Activated CD4-positive, alpha-beta memory T cell treated with anti-CD3 and anti-CD28 coated beads, Interleukin-2, amount 10 ng/mL, durations not matched to agents 7 days and 5 days (primary cell): ENCODE measurements at regions of chr11 and their contacts with region 1.

Region 1: DNA sequence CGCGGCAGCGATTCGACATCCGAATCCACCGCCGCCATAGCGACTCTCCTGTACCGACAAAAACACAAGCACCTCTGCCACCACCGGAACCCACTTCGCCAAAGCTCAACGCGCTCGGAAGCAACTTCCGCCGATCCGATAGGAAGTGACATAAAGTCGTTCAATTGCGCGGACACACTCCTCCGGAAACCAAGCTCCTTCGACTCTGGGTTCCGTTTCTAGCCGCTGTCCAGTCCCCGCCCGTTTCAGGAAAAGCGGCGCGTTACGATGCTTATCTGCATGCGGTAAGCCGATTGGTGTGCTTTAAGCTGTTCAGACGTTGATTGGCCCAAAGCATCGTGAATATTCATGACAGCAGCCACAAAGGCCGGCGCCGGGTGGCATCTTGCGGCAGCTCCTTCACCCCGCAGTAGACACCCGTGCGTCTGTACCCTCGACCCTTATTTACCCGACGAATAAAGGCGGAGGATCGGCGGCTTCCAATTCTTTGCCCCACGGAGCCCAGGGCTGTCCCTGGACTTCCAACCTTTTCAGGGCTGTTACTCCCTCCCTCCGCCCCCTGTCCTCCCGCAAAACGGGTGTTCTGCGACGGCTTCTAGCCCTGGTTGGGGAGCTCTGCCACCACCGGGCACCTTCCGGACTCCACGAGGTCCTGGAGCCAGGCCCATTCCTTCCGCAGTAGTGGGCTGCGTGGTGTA is at the start of gene TUT1:
- DNase-seq: peak; percentile 98
- H3K4me3 Mint-ChIP-seq: peak within 1 kb of the TSS; percentile 99
- H3K27ac Mint-ChIP-seq: peak within 1 kb of the TSS; percentile 96
- H3K4me1 Mint-ChIP-seq: peaks cover 65% of the 10 kb centered on the region
- H3K27me3 Mint-ChIP-seq: no peaks in the 10 kb centered on the region
- total RNA-seq, gene TUT1: 23.7 to 25.2 TPM

Region 2: GRCh38 chr11:61776551-61777075 is 815.0 kb before region 1 on chr11:
- CTCF ChIA-PET with region 1: no interaction called
- POLR2A ChIA-PET with region 1: no interaction called
- DNase-seq: peak; percentile 77
- H3K4me3 Mint-ChIP-seq: no peak overlapping the region
- H3K27ac Mint-ChIP-seq: no peak overlapping the region
- H3K4me1 Mint-ChIP-seq: peaks cover 34% of the 10 kb centered on the region
- H3K27me3 Mint-ChIP-seq: peaks cover 4% of the 10 kb centered on the region

Region 3: GRCh38 chr11:62542750-62543567 is 48.6 kb before region 1 on chr11:
- CTCF ChIA-PET with region 1: interaction called, 17 read pairs
- POLR2A ChIA-PET with region 1: interaction called, 19 read pairs
- DNase-seq: peak; percentile 80
- H3K4me3 Mint-ChIP-seq: peak overlapping the region; percentile 100
- H3K27ac Mint-ChIP-seq: peak overlapping the region; percentile 93
- H3K4me1 Mint-ChIP-seq: peaks cover 76% of the 10 kb centered on the region
- H3K27me3 Mint-ChIP-seq: peaks cover 4% of the 10 kb centered on the region

Region 4: GRCh38 chr11:62612366-62613290 is 21.0 kb after region 1 on chr11 and contains the starts of genes EML3 and ROM1:
- CTCF ChIA-PET with region 1: interaction called, 28 read pairs
- POLR2A ChIA-PET with region 1: interaction called, 70 read pairs
- DNase-seq: peak; percentile 91
- H3K4me3 Mint-ChIP-seq: peak within 1 kb of the TSS; percentile 97
- H3K27ac Mint-ChIP-seq: peak within 1 kb of the TSS; percentile 93
- H3K4me1 Mint-ChIP-seq: peaks cover 65% of the 10 kb centered on the region
- H3K27me3 Mint-ChIP-seq: no peaks in the 10 kb centered on the region
- total RNA-seq, gene EML3: 121 to 122 TPM
- total RNA-seq, gene ROM1: 1.6 to 2.2 TPM

Region 5: DNA sequence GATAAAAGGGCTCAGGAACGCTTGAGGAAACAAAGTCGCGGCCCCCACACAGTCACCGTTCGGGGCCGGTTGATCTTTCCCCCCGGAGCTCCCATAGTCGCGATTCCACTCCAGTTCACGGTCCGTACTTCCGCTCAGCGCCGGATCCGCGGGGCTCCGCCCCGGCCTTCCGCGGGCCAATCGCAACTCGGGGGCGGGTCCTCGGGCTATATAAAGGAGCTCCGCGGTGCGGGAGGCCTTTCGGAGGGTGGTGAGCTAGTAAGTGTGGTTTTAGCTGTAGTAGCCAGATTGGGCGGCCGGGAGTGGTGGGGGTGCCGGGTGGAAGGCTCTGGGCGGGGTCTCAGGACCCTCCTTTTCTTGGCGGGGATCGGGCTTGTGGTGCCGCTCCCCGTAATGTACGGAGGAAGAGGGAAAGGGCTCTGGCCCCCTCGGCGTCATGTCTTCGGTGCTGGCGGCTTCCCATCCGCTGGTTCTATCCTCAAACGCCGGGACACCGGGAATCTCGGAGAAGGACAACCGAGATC is 73.5 kb after region 1 on chr11 and contains the starts of genes C11orf98 and CSKMT:
- CTCF ChIA-PET with region 1: interaction called, 11 read pairs
- POLR2A ChIA-PET with region 1: interaction called, 63 read pairs
- DNase-seq: peak; percentile 96
- H3K4me3 Mint-ChIP-seq: peak within 1 kb of the TSS; percentile 93
- H3K27ac Mint-ChIP-seq: peak within 1 kb of the TSS; percentile 88
- H3K4me1 Mint-ChIP-seq: peaks cover 52% of the 10 kb centered on the region
- H3K27me3 Mint-ChIP-seq: no peaks in the 10 kb centered on the region
- total RNA-seq, gene C11orf98: 88.4 to 93.5 TPM
- total RNA-seq, gene CSKMT: 16.6 to 18.3 TPM

Region 6: GRCh38 chr11:62705880-62706849 is 114.6 kb after region 1 on chr11:
- CTCF ChIA-PET with region 1: interaction called, 3 read pairs
- POLR2A ChIA-PET with region 1: interaction called, 29 read pairs
- DNase-seq: peak; percentile 96
- H3K4me3 Mint-ChIP-seq: peak overlapping the region; percentile 92
- H3K27ac Mint-ChIP-seq: peak overlapping the region; percentile 69
- H3K4me1 Mint-ChIP-seq: peaks cover 56% of the 10 kb centered on the region
- H3K27me3 Mint-ChIP-seq: no peaks in the 10 kb centered on the region

Region 7: DNA sequence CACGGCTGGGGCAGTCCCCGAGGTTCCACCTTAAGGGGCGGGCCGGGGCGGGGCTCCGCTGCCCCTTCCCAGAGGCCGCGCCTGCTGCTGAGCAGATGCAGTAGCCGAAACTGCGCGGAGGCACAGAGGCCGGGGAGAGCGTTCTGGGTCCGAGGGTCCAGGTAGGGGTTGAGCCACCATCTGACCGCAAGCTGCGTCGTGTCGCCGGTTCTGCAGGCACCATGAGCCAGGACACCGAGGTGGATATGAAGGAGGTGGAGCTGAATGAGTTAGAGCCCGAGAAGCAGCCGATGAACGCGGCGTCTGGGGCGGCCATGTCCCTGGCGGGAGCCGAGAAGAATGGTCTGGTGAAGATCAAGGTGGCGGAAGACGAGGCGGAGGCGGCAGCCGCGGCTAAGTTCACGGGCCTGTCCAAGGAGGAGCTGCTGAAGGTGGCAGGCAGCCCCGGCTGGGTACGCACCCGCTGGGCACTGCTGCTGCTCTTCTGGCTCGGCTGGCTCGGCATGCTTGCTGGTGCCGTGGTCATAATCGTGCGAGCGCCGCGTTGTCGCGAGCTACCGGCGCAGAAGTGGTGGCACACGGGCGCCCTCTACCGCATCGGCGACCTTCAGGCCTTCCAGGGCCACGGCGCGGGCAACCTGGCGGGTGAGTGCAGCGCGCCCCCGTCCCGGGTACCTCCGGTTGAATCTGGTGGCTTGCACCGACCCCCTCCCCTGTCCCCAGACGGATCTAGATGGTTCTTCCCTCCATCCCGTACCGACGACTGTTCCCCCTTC is 289.4 kb after region 1 on chr11 and contains the start of gene SLC3A2:
- CTCF ChIA-PET with region 1: interaction called, 9 read pairs
- POLR2A ChIA-PET with region 1: interaction called, 21 read pairs
- DNase-seq: peak; percentile 92
- H3K4me3 Mint-ChIP-seq: peak within 1 kb of the TSS; percentile 99
- H3K27ac Mint-ChIP-seq: peak within 1 kb of the TSS; percentile 100
- H3K4me1 Mint-ChIP-seq: peaks cover 51% of the 10 kb centered on the region
- H3K27me3 Mint-ChIP-seq: no peaks in the 10 kb centered on the region
- total RNA-seq, gene SLC3A2: 262 to 279 TPM